Left lung (tissue), 14 donors: ENCODE measurements at regions of chr7 and their contacts with region 1.

Region 1: DNA sequence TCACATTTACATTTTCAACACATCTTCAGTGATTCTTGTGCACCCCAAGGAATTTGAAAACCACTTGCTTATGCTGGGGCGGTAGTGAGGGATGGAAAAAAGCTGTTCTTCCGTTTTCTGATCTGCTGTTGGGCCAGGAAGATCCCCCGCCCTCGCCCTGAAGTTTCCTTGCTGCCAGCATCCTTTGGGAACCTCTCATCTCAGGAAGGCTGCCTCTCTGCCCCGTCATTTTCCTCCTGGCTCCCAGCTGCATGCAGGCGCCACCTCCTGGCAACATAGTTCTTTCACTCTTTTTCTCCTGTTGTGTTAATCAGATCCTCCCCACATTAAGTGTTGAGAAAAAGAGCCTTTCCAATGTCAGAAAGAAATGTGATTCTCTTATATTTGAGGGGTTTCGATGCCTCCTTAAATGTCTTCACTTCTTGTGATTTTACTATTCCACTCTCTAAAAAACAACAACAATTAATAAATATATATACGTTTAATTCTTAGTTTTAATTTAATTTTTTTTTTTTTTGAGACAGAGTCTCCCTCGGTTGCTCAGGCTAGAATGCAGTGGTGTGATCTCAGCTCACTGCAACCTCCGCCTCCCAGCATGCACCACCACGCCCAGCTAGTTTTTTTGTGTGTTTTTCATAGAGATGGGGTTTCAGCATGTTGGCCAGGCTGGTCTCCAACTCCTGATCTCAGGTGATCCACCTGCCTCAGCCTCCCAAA is 122.9 kb downstream of the RALA start:
- DNase-seq: peak; percentile 67 to 85 (median 75)
- ATAC-seq: peak; percentile 93
- H3K4me3 ChIP-seq: no peak overlapping the region
- H3K27ac ChIP-seq: no peak overlapping the region
- H3K4me1 ChIP-seq: peaks cover 0 to 5% of the 10 kb centered on the region in 2 donors
- H3K27me3 ChIP-seq: no peaks in the 10 kb centered on the region
- CTCF ChIP-seq: peak; percentile 59 to 64

Region 2: DNA sequence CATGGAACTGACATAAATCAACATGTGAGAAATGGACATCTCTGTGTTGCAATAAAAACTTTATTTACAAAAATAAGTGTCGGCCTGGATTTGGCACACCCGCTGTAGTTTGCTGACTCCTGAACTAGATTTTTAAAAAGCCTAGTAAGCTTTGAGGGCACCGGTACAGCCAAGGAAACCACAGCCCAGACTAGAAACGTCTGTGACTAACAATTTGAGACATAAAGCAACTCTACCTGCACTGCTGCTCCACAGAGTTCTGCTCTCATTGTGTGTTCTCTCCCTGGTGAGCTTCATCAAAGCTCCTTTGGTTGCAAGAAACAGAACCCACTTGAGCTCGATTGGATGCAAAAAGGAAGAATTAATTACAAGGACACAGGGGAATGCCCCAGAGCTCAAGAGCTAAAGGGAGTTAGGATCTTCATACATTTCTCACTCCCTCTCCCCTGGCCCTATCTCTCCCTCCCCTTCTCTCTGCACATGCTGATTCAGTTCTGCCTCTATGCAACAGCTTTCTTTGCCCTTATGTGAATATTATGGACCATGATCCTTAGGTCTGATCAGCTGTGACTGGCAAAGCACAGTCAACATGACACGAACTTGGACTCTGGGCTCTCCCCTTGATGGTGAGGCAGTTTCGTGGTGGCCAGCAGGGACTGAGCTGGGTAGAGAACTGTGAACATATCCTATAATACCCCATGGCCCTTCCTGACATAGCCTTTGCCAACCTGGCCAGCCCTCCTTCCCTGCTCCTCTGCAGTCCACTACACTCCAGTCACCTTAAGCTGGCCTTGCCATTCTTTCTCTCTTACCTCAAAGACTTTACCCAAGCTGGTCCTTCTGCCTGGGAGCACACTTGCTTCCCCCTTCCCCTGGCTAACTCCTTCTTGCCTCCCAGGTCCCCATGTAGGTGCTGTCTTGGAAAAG is 257.5 kb before region 1 on chr7:
- intact Hi-C with region 1: no loop called
- DNase-seq: no peak
- ATAC-seq: no peak
- H3K4me3 ChIP-seq: no peak overlapping the region
- H3K27ac ChIP-seq: no peak overlapping the region
- H3K4me1 ChIP-seq: no peaks in the 10 kb centered on the region
- H3K27me3 ChIP-seq: no peaks in the 10 kb centered on the region
- CTCF ChIP-seq: no peak

Region 3: DNA sequence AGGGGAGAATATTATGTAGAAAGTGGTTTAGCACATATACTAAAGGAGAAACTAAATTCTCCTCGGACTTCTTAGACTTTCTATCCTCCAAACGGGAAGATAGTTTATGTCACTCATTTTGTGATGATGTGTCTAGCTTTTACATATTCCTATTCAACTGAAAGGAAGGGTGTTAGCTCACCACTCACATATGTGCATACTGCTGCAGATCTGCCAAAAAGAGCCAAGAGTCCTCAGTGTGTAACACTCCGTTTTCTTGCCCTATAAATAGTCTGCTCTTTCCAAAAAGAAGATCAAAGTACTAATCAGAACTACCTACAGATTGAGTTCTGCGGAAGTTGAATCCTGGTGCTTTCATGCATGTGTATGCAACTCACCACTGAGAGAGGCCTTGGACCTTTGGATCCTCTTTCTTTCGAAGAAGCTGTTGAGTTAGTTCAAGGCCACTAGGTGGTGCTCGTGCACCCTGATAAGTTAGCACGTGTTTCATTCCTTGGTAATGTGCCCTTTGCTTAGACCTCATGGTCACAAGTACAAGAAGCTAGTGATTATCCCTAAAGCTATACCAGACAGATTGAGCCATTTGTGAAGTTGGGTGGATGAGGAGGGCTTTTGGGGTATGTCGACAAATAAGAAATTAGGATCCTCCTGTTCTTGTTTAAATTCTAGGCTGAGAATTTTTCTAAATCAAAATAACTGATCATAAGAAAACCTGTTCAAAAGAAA is 165.9 kb before region 1 on chr7:
- intact Hi-C with region 1: loop called (anchors 5 to 10 kb)
- DNase-seq: peak in 3 of 4 donors; percentile 72 to 94 (median 86)
- ATAC-seq: peak; percentile 100
- H3K4me3 ChIP-seq: no peak overlapping the region
- H3K27ac ChIP-seq: no peak overlapping the region
- H3K4me1 ChIP-seq: no peaks in the 10 kb centered on the region
- H3K27me3 ChIP-seq: no peaks in the 10 kb centered on the region
- CTCF ChIP-seq: peak; percentile 82 to 84

Region 4: DNA sequence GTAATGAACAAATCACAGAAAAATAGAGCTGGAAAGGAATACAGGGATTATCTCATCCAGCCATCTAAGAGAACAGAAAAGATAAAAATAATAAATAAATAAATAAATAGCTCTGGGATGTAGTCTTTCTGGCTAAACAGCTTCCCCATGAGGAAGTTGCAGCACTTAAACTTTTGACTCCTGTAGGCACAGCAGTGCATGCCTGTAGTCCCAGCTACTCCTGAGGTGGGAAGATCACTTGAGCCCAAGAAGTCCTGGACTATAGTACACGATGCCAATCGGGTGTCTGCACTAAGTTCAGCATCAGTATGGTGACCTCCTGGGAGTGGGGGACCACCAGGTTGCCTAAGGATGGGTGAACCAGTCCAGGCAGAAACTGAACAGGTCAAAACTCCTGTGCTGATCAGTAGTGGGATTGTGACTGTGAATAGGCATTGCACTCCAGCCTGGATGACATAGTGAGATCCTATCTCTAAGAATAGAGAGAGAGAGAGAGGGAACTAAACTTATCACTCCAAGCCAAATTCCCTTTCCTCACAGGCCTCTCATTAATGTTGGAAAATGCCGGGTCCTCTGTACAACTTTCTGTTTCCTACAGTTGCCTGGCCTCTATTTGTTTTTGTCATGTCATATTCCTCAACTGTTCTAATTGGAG is 142.1 kb after region 1 on chr7:
- intact Hi-C with region 1: no loop called
- DNase-seq: peak in 1 of 4 donors; percentile 10
- ATAC-seq: no peak
- H3K4me3 ChIP-seq: no peak overlapping the region
- H3K27ac ChIP-seq: no peak overlapping the region
- H3K4me1 ChIP-seq: peaks cover 0 to 4% of the 10 kb centered on the region in 2 donors
- H3K27me3 ChIP-seq: peaks cover 0 to 9% of the 10 kb centered on the region in 2 donors
- CTCF ChIP-seq: no peak